Activated CD4-positive, alpha-beta T cell treated with anti-CD3 and anti-CD28 coated beads for 36 hours (primary cell): ENCODE measurements at regions of chr16 and their contacts with region 1.

Region 1: GRCh38 chr16:89357055-89357816 is 133.1 kb downstream of the ANKRD11 start:
- DNase-seq: peak; percentile 87
- ATAC-seq: peak; percentile 65
- H3K4me3 Mint-ChIP-seq: peak overlapping the region; percentile 3
- H3K27ac Mint-ChIP-seq: peak overlapping the region; percentile 32
- H3K4me1 Mint-ChIP-seq: peaks cover 92% of the 10 kb centered on the region
- H3K27me3 Mint-ChIP-seq: no peaks in the 10 kb centered on the region

Region 2: DNA sequence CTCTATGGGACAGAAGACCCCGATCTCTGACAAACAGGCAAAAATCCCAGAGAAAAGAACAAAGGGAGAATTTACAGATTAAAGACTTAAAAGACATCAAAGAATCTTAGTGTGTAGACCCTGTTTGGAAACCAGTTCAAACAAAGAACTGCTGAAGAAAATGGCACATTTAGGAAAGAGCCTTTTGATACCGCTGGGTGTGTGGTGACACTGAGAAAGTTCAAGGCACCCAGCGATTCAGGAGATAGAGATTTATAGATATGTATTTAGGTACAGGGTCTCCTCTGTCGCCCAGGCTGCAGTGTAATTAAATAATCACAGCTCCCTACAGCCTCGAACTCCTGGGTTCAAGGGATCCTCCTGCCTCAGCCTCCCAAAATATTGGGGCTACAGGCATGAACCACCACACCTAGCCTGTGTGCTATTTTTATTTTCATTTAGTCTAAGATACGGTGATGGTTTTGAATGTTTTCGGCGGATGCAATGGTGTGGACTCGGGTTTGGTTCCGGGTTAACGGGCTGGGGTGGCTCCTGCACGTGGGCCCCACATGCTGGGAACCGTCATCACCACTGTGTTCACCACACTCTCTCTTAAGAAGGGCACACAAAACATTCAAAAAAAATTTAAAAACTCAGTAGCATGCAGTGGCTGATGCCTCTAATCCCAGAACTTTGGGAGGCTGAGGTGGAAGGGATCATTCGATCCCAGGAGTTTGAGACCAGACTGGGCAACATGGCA is 25.7 kb before region 1 on chr16:
- CTCF ChIA-PET with region 1: interaction called, 5 read pairs
- POLR2A ChIA-PET with region 1: interaction called, 3 read pairs
- intact Hi-C with region 1: loop called in 1 of 2 experiments (anchors 1 kb)
- DNase-seq: no peak
- ATAC-seq: no peak
- H3K4me3 Mint-ChIP-seq: no peak overlapping the region
- H3K27ac Mint-ChIP-seq: peak overlapping the region; percentile 37
- H3K4me1 Mint-ChIP-seq: peaks cover 88% of the 10 kb centered on the region
- H3K27me3 Mint-ChIP-seq: no peaks in the 10 kb centered on the region

Region 3: GRCh38 chr16:89338863-89339262 is 18.4 kb before region 1 on chr16:
- CTCF ChIA-PET with region 1: interaction called, 4 read pairs
- POLR2A ChIA-PET with region 1: interaction called, 3 read pairs
- intact Hi-C with region 1: loop called in 1 of 2 experiments (anchors 1 kb)
- DNase-seq: no peak
- ATAC-seq: no peak
- H3K4me3 Mint-ChIP-seq: no peak overlapping the region
- H3K27ac Mint-ChIP-seq: peak overlapping the region; percentile 63
- H3K4me1 Mint-ChIP-seq: peaks cover 70% of the 10 kb centered on the region
- H3K27me3 Mint-ChIP-seq: no peaks in the 10 kb centered on the region

Region 4: DNA sequence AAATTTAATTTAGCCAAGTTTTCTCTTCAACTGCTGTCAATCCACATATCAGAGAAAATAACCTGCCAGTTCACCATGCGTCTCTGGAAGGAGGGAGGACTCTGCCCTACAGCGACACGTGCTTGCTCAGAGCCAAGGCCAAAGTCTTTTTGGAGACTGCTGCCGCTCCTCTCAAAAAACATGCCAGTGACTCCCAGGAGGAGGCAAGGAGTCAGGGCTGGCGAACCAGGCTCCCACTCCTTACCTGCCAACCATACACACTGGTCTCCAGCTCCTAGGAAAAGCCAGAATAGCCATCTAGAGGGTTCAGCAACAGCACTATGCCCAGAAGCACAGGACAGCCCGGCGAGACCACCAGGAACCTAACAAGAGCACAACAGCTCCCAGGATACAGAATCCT is 60.1 kb after region 1 on chr16:
- CTCF ChIA-PET with region 1: interaction called, 3 read pairs
- POLR2A ChIA-PET with region 1: no interaction called
- intact Hi-C with region 1: loop called in 1 of 2 experiments (anchors 5 kb)
- DNase-seq: no peak
- ATAC-seq: no peak
- H3K4me3 Mint-ChIP-seq: no peak overlapping the region
- H3K27ac Mint-ChIP-seq: no peak overlapping the region
- H3K4me1 Mint-ChIP-seq: peaks cover 77% of the 10 kb centered on the region
- H3K27me3 Mint-ChIP-seq: no peaks in the 10 kb centered on the region